Posterior cingulate gyrus (tissue), 11 donors: ENCODE measurements at regions of chr2 and their contacts with region 1.

Region 1: DNA sequence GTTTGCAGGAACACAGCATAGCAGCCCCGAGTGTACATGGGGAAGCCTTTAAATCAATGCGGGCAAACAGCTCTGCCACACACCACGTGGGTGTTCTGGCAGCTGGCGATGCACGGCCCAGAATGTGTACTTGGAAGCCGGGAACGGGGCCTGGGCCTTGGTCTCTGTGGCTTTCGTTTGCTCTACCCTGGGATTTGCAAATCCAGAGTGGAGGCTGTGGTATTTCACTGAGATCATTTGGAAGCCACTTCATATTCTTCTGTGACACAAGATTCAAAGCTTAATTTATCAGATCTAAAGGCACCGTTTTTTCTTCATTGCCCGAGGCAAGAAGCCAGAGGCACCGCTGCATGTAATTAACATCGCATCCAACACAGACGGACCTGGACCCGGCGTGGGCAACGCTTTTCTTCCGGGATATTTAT is 246.3 kb upstream of the MYT1L start:
- DNase-seq: peak; percentile 81 to 98 (median 88)

Region 2: DNA sequence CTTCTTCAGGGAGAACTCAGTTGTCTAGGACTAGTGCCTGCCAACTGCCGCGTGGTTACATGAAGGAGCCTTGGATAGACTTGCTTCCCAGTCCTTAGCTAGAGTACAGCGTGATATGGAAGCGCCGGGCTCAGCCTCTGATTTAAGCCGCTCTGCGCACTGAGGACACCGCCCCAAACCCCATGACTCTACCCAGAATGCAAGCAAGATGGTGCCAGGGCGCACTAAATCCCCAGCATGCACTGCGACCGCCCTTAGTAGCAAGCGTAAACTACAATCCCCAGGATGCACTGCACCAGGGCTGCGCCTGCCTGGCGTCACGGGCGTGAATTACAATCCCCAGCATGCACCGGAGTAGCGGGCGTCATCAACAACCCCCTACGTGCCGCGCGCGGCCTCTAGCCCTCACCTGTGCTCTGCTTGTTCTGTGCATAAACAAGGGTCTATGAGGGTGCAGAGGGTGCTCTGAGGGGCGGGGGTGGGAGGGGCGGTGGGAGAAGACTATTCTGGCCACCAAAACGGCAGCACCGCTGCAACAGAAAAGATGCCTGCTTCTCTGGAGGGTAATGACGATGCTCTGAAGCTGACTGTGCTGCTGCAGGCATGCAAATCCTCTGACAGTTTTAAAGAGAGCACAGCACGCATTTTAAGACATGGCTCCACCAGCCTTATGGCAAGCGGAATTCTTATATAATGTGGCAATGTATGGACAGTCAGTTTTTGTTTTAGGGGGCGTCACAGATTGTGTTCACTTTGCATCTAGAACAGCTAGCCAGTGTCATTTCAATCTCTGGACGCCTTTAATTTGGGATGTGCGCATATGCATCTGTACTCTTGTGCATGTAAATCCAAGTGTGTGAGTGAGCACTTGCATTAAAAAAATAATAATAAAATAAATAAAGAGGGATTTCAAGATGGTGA is 36.1 kb after region 1 on chr2:
- intact Hi-C with region 1: loop called (anchors 2 kb)
- DNase-seq: peak; percentile 94 to 99 (median 96)